ENCODE measurements at regions of chr11 and their contacts with region 1.

Region 1: DNA sequence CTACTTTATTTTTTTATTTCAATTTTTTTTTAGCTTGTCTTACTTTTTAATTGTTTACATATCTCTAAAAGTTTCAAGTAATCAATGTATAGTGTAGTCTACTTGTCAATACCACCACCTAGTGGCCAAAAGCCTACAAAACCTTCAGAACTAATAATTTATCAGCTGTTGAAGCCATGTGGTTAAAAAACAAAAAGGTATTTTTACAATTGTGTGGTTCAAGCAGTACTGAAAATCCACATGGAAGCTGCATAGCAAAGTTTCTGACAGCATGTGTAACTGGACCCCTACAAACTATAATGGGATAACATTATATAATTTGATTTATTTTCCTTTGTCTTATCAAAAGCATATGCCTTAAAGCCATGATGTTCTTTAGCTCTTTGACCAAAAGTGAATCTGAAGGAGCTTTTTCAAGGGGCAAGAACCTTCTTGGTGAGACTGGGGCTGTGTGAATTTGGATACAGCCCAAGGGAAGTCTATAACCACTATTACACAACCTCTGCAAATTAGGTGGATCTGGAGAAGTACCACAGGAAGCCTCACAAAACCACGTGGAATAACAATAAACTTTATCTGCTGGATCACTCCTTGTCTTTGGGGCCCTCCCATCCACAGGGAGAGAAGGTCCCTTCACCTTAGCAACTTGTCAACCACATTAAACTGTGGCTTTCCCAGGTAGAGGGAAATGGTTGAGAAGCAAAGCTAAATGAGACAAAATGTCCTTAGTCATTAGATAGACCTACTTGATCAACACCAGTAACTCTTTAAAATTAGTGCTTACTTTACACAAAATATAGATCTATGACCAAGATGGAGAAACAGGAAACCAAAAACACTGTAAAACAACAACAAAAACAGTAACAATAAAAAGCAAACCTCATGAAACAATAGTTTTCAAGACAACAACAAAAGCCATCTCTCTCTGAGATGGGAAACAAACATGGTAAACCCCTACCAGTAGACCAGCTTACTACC is 9.9 kb downstream of the NARS2 start:
- DNase-seq: peak; percentile 76
- ATAC-seq: peak; percentile 77
- H3K4me3 Mint-ChIP-seq: no peak overlapping the region
- H3K27ac Mint-ChIP-seq: peak overlapping the region; percentile 73
- H3K4me1 Mint-ChIP-seq: peaks cover 42% of the 10 kb centered on the region
- H3K27me3 Mint-ChIP-seq: no peaks in the 10 kb centered on the region

Region 2: DNA sequence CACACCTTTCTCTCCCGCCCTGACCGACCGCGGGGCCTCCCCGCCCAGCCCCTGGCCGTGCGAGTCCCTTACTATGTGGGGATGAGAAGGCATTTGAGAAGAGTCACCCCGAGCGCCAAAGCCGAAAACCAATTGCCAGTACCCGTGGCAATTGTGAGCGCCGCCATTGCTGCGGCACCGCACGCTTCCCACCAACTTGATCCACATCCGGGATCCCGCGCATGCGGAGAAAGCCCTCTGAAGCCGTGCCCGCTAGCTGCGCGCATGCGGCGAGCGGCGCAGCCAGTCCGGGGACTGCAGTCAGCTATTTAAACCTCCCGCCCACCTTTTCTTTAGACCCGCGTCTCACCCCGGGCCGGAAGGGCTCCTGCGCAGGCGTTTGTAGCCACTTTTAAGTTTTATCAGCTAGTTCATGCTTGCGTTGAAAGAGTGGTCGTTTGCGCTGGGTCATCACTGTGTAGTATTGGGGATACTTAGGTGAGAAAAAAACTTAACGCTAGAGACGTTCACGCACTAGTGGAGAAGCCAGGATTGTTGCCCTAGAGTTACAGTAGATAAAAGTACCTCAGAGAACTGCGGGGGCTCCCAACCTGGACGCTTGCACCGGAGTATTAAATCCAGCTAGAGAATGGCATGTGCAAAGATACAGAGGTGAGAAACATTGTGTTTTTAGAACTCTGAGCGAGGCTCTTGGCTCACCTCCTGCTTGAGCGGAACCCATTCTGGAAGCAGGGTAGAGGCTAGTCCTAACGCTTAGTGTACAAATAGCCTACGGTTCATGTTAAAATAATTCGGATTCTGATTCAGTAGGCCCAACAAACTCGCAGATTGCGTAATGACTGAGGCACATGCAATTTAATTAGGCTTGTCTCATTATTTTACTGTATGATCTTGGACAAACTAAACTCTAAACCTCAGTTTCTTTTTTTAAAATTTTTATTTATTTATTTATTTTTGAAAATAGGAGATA is 425.1 kb before region 1 on chr11 and contains the start of gene ALG8:
- CTCF ChIA-PET with region 1: interaction called, 26 read pairs
- POLR2A ChIA-PET with region 1: no interaction called
- DNase-seq: peak; percentile 97
- ATAC-seq: peak; percentile 97
- H3K4me3 Mint-ChIP-seq: peak within 1 kb of the TSS; percentile 80
- H3K27ac Mint-ChIP-seq: peak within 1 kb of the TSS; percentile 93
- H3K4me1 Mint-ChIP-seq: peaks cover 44% of the 10 kb centered on the region
- H3K27me3 Mint-ChIP-seq: no peaks in the 10 kb centered on the region
- total RNA-seq, gene ALG8: 49.9 to 51.7 TPM

Region 3: GRCh38 chr11:78188286-78189173 is 376.2 kb before region 1 on chr11 and contains the starts of genes KCTD21 and USP35:
- CTCF ChIA-PET with region 1: interaction called, 20 read pairs
- POLR2A ChIA-PET with region 1: no interaction called
- DNase-seq: peak; percentile 95
- ATAC-seq: peak; percentile 97
- H3K4me3 Mint-ChIP-seq: peak within 1 kb of the TSS; percentile 99
- H3K27ac Mint-ChIP-seq: peak within 1 kb of the TSS; percentile 93
- H3K4me1 Mint-ChIP-seq: peaks cover 51% of the 10 kb centered on the region
- H3K27me3 Mint-ChIP-seq: no peaks in the 10 kb centered on the region
- total RNA-seq, gene KCTD21: 7.1 to 7.8 TPM
- total RNA-seq, gene USP35: 11.9 to 12.8 TPM

Region 4: DNA sequence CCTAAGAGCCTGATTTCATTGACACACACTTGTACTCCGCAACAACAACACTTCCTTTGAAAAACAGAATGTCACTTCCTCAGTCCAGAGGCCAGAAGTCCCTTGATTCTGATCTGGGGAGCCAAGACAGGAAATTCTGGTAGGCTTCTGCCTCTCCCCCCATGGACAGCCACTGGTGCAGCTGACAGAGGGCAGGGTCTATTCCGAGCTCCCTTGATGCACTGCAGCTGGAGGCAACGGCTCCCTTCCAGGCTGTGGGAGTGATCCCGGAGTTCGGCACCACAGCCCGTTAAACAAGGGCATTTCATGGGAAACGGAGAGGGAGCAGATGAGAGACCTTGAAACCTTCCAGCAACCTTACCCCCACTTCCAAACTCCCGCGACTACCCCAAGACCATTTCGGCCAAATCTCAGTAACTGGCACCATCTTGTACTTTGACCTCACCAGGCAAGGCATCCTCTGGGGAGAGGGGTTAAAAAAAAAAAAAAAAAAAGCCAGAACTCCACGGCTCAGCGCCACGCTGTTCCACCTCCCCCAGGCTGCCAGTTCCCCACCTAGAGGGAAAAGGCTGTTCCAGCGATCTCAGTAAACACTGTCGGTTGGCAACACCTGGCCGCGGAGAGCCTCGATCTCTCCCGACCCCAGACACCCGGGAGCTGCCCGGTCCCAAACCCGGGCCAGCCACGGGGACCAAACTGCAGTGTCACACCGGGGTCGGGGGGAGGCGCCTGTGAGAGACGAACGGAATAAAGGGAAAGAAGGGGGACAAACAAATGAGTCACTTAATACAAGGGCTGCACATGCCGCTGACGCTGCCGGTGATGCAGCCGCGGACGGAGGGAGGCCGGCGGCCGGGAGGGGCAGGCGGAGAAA is 148.2 kb before region 1 on chr11:
- CTCF ChIA-PET with region 1: interaction called, 136 read pairs
- POLR2A ChIA-PET with region 1: no interaction called
- DNase-seq: peak; percentile 83
- ATAC-seq: peak; percentile 61
- H3K4me3 Mint-ChIP-seq: peak overlapping the region; percentile 93
- H3K27ac Mint-ChIP-seq: peak overlapping the region; percentile 84
- H3K4me1 Mint-ChIP-seq: peaks cover 43% of the 10 kb centered on the region
- H3K27me3 Mint-ChIP-seq: peaks cover 23% of the 10 kb centered on the region

Region 5: GRCh38 chr11:78438298-78438975 is 126.3 kb before region 1 on chr11:
- CTCF ChIA-PET with region 1: interaction called, 15 read pairs
- POLR2A ChIA-PET with region 1: no interaction called
- DNase-seq: no peak
- ATAC-seq: no peak
- H3K4me3 Mint-ChIP-seq: no peak overlapping the region
- H3K27ac Mint-ChIP-seq: no peak overlapping the region
- H3K4me1 Mint-ChIP-seq: no peaks in the 10 kb centered on the region
- H3K27me3 Mint-ChIP-seq: no peaks in the 10 kb centered on the region

Region 6: DNA sequence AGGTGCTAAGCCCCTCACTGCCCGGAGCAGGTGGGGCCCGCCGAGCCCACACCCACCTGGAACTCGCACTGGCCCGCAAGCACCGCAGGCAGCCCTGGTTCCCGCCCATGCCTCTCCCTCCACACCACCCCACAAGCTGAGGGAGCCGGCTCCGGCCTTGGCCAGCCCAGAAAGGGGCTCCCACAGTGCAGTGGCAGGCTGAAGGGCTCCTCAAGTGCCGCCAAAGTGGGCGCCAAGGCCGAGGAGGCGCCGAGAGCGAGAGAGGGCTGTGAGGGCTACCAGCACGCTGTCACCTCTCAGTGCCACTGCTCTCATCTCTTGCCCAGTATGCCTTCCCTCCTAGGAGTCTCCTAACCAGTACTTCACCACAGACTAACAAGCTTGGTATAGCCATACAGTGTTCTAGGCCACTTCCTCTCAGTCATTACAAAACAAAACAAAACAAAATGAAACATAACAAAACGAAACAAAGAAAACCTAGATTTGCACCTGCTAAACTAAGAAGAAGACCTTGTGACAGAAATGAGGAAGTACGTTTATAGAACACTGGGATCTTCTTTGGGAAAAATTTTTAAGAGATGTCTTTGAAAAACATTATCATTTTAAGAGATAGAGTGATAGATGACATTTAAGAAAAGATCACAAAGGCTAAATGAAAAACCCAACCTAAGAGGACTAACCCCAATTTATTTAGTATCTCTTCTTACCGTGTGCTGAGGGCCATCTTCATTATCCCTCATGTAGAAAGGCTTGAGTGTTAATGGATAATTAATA is 99.4 kb before region 1 on chr11:
- CTCF ChIA-PET with region 1: interaction called, 17 read pairs
- POLR2A ChIA-PET with region 1: no interaction called
- DNase-seq: peak; percentile 68
- ATAC-seq: peak; percentile 99
- H3K4me3 Mint-ChIP-seq: peak overlapping the region; percentile 63
- H3K27ac Mint-ChIP-seq: peak overlapping the region; percentile 89
- H3K4me1 Mint-ChIP-seq: peaks cover 35% of the 10 kb centered on the region
- H3K27me3 Mint-ChIP-seq: no peaks in the 10 kb centered on the region